Activated T-helper 2 cell treated with anti-CD3 and anti-CD28 coated beads, Interferon-gamma antibody, Interleukin-2, Interleukin-4, amounts not matched to agents 10 μg/mL and 5 μg/mL and 100 μg/mL, durations not matched to agents 14 hours and 24 hours and 36 hours (primary cell): ENCODE measurements at regions of chr22 and their contacts with region 1.

Region 1: DNA sequence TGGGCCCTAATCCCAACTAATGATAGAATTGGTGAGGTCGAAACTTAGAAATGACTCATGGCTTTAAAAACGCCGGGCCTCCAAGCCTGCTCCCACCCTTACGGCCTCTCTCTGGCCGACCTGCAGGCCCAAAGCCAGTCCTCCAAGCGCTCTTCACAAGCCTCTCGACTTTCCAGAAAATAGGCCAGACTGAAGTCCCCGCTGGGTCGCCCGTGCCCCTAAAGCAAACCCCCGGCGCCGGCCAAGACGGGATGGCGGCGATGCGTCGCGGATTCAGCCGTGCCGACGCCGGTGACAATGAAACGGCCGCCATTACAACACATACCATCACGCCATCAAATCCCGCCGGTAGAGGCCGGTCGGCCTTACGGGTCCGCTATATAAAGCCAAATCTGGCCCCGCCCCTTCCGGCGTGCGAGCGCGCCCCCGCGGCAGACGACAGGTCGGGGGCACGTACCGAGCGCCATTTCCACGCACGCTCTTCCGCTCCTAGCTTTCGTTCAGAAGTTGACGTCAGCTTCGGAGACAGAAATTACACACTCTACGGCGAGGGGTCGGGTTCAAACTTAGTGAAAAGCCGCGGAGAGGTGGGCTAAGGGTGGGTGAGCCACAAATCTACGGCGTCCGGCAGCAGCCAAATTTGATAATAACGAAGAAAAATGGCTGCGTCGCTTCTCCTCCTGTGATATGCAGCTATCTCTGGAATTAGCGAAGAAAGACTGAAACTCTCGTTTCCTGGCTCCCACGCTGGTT is at the start of gene RPL3:
- DNase-seq: peak; percentile 95
- H3K4me3 Mint-ChIP-seq: peak within 1 kb of the TSS; percentile 98
- H3K27ac Mint-ChIP-seq: peak within 1 kb of the TSS; percentile 98
- H3K4me1 Mint-ChIP-seq: peaks cover 27% of the 10 kb centered on the region
- H3K27me3 Mint-ChIP-seq: no peaks in the 10 kb centered on the region
- total RNA-seq, gene RPL3: 2,214 and 2,255 TPM in 2 replicates

Region 2: GRCh38 chr22:39152511-39153219 is 166.8 kb before region 1 on chr22 and contains the start of gene CBX7:
- intact Hi-C with region 1: loop called (anchors 5 kb)
- DNase-seq: peak; percentile 90
- H3K4me3 Mint-ChIP-seq: peak within 1 kb of the TSS; percentile 78
- H3K27ac Mint-ChIP-seq: peak within 1 kb of the TSS; percentile 42
- H3K4me1 Mint-ChIP-seq: peaks cover 17% of the 10 kb centered on the region
- H3K27me3 Mint-ChIP-seq: peaks cover 29% of the 10 kb centered on the region
- total RNA-seq, gene CBX7: 11.6 and 11.8 TPM in 2 replicates

Region 3: DNA sequence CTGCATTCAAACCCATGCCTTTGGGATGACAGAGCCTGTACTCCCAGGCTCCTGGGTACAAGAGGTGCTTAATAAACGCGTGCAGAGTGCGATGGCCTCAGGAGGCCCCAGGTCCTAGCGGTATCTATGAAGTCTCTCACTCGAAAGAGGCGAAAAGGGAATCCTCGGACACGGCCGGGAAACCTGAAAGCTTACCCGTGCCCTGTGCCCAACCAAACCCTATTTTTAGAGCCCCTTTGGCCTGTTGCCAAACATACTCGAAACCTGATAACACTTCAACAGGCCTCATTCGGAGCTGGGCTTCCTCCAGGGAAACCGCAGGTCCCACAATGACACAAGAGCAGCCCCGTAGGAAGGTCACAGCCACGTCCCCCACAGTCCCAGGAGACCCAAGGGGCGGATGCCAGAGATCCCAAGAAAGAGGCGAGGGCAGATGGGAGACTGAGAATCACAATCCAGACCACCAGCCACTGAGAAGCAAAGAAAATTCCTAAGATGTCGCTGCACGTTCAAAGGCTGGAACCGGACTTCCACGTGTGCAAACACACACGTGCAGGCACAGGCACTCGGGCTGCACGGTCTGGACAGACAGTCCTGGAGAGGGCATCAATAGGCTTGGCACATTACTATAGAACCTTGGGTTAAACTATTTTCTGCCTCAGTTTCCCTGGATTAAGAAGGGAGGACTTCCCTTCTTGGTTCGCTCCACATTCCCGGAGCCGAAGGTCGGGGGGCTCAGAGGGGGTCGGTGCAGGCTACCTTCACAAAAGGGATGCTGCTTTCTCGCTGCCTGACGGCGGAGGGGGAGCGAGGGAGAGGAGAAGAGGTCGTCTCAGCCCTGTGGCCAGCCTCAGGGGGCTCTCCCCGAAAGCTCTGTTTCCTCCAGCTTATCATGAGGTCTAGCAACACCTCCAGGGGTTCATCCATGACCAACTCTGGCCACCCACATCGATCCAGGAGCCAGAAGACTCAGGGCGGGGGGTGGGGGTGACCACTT is 82.8 kb before region 1 on chr22:
- intact Hi-C with region 1: loop called (anchors 5 kb)
- DNase-seq: no peak
- H3K4me3 Mint-ChIP-seq: peak overlapping the region; percentile 37
- H3K27ac Mint-ChIP-seq: peak overlapping the region; percentile 1
- H3K4me1 Mint-ChIP-seq: peaks cover 40% of the 10 kb centered on the region
- H3K27me3 Mint-ChIP-seq: peaks cover 65% of the 10 kb centered on the region

Region 4: GRCh38 chr22:39520054-39520891 is 200.8 kb after region 1 on chr22 and contains the start of gene ATF4:
- intact Hi-C with region 1: loop called (anchors 1 kb)
- DNase-seq: peak; percentile 97
- H3K4me3 Mint-ChIP-seq: peak within 1 kb of the TSS; percentile 96
- H3K27ac Mint-ChIP-seq: peak within 1 kb of the TSS; percentile 98
- H3K4me1 Mint-ChIP-seq: peaks cover 48% of the 10 kb centered on the region
- H3K27me3 Mint-ChIP-seq: no peaks in the 10 kb centered on the region
- total RNA-seq, gene ATF4: 339 and 348 TPM in 2 replicates